AG04449 (cell line): ENCODE measurements at regions of chr11 and their contacts with region 1.

Region 1: DNA sequence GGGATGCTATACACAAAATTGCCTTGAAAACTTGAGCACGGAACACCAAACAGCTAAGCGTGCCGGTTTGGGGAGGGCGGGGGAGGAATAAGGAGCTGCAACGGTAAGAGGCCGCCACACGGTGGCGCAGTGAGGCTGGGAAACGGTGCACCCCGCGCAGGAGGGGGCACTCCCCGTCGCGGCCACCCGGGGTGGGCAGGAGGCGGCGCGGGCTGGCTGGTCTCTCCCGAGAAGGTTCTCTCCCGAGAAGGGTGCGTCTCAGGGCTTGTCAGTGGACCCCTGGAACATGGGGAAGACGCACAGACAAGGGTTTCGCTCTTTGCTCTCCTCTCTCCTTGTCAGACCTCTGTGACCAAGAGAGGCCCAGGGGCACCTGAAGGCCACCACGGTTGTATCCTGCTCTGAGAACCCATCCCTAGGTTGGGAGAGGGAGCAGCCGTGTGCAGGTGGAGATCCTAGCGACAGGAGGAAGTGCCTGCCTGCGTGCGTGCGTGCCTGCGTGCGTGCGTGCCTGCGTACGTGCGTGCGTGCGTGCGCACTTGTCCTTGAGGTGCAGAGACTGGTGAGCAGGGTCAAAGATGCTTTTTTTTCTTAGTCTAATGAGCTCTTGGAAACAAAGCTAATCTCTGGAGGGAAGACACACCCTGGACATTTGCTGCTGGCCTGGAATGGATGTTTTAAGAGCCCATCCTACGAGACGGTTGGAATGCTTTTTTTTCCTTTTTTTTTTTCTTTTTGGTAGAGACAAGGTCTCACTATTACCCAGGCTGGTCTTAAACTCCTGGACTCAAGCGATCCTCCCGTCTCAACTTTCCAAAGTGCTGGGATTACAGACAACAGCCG is 18.1 kb upstream of the JAM3 start:
- DNase-seq: no peak
- H3K4me3 ChIP-seq: peak overlapping the region; percentile 49
- CTCF ChIP-seq: peak; percentile 95

Region 2: DNA sequence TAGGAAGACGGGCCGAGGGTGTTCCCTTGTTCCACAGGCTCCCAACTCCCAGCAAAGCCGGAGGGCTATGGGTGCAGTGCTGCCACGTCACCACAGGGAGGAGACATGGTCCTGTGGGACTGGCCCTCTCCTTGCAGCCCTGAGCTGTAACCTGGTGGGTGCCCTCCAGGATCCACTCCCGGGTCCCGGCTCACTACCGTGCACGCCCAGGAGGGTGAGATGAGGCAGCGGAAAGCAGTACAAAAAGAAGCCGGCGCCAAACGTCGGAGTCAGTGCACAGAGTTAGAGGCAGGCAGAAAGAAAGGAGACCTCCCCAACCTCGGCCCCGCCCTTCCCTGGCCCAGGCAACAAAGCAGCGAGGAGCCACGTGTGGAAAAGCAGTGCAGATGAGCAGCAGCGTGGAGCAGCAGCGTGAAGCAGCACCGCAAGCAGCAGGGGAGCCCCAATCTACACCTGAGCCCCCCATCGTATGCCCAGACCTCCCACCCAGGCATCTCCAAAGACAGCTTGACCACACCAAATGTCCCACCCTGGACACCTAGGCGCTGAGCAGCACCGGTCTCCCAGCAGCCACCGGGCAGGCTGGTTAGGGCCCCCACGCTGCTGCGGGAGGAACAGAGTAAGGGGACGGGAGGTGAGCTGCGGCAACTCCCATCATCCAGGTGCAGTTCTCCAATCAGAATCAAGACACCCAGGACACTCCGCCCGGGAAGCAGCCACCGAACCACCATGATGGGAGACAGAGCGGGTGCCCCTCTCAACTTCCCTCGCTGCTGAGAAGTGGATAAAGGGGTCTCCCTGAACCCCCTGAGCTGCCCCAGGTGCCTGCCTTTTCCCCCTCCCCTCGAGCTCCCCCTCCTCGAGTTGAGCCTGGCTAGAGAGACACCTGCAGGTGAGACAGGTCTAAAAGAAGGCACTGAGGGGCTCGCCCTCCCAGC is 122.8 kb before region 1 on chr11:
- CTCF ChIA-PET with region 1: interaction called, 24 read pairs
- POLR2A ChIA-PET with region 1: no interaction called
- DNase-seq: no peak
- H3K4me3 ChIP-seq: peak overlapping the region; percentile 15; the same call in 1 of the 2 replicates
- CTCF ChIP-seq: peak; percentile 97

Region 3: DNA sequence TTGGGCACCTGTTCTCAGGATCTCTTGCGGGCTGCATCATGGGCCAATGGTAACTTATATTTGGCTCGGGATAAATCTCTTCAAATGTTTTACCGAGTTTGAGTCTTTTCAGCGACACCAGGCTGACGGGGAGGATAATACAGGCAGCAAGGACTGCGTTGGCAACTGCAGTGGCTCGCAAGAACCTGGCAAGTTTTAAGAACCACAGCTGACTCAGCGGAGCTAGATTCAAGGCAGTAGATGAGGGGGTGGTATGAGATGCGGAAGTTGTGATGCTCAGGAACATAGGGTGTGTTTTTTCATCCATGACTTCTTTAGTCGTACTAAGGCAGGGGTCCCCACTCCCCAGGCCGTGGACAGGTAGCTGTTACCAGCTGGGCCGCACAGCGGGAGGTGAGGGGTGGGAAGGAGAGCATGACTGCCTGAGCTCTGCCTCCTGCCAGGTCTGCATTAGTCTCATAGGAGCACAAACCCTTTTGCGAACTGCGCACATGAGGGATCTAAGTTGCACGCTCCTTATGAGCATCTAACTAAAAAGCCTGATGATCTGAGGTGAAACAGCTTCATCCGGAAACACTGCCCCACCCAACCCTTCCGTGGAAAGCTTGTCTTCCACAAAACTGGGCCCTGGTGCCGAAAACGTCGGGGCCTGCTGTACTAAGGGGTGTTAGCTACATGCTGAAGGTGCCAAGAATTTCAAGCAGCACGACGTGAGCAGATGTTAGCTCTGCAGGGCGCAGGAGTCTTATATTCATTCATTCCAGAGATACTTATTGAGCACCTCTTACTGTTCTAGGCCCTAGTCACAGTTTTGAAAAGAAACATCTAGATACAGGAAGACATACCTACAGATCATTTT is 11.7 kb after region 1 on chr11:
- CTCF ChIA-PET with region 1: interaction called, 98 read pairs
- POLR2A ChIA-PET with region 1: interaction called, 3 read pairs
- DNase-seq: no peak
- H3K4me3 ChIP-seq: no peak overlapping the region
- CTCF ChIP-seq: no peak

Region 4: DNA sequence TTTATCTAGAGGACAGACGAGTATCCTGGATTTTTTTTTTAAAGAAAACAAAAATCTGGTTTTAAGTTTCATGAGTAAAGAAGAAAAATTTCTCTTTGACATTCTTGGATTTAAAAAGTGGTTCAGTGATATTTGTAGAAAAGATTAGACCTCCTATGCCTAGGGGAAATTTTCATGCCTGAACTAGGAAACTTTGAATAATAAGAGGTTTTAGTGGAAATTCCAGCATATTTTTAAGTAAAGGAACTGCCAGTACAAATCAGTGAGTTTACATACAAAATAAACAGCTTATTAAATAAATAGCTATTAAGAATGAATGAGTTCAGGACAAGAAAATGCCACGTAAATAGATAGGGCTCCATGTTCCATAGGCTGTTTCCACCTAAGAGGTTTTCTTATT is 35.6 kb after region 1 on chr11:
- CTCF ChIA-PET with region 1: interaction called, 11 read pairs
- POLR2A ChIA-PET with region 1: no interaction called
- DNase-seq: no peak
- H3K4me3 ChIP-seq: no peak overlapping the region
- CTCF ChIP-seq: no peak

Region 5: GRCh38 chr11:134132793-134133192 is 82.0 kb after region 1 on chr11:
- CTCF ChIA-PET with region 1: interaction called, 41 read pairs
- POLR2A ChIA-PET with region 1: no interaction called
- DNase-seq: no peak
- H3K4me3 ChIP-seq: no peak overlapping the region
- CTCF ChIP-seq: no peak

Region 6: GRCh38 chr11:134150195-134150903 is 99.6 kb after region 1 on chr11:
- CTCF ChIA-PET with region 1: interaction called, 16 read pairs
- POLR2A ChIA-PET with region 1: no interaction called
- DNase-seq: no peak
- H3K4me3 ChIP-seq: no peak overlapping the region
- CTCF ChIP-seq: no peak